Sigmoid colon (tissue), 7 donors: ENCODE measurements at regions of chr9 and their contacts with region 1.

Region 1: DNA sequence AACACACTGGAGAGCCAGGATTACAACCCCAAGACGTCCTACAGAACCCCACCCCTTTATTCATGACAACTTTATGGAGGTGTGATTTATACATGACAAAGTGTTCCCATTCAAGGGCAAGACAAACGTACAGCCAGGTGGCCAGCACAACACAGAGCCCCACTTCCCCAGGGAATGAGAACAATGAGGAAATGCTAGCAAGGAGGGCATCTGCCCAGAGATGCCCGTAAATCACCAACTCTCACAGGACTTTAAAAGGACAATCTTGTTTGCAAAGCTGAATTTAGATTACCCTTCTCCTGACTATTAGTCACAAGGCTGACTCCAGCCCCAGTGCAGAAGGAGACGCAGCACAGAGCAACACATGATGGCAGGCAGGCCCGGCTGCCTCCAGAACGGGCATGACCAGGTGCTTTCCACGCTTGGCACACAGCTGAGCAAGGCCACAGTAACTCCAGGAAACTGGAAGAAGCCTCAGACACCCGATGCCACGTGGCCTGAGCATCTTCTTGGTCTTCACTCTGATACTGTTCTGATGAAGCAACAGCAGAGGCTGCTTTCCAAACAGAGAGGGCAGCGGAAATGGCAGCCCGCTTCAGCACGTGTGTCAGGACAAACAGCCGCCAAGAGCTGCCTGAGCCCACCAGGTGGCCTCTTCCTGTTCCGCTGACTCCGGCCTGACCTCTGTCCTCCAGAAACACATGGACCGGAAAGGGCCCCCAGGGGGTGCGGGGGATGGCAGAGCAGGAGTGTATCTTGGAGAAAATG is 51.4 kb downstream of the ROR2 start:
- DNase-seq: peak; percentile 92
- H3K4me3 ChIP-seq: no peak overlapping the region
- H3K27ac ChIP-seq: peak overlapping the region; percentile 82 to 94 (median 86)
- H3K4me1 ChIP-seq: peaks cover 0 to 99% (median 95%) of the 10 kb centered on the region in 4 donors
- H3K27me3 ChIP-seq: no peaks in the 10 kb centered on the region
- CTCF ChIP-seq: no peak
- EP300 ChIP-seq: peak; percentile 73 to 92 (median 74)
- POLR2A ChIP-seq: no peak

Region 2: DNA sequence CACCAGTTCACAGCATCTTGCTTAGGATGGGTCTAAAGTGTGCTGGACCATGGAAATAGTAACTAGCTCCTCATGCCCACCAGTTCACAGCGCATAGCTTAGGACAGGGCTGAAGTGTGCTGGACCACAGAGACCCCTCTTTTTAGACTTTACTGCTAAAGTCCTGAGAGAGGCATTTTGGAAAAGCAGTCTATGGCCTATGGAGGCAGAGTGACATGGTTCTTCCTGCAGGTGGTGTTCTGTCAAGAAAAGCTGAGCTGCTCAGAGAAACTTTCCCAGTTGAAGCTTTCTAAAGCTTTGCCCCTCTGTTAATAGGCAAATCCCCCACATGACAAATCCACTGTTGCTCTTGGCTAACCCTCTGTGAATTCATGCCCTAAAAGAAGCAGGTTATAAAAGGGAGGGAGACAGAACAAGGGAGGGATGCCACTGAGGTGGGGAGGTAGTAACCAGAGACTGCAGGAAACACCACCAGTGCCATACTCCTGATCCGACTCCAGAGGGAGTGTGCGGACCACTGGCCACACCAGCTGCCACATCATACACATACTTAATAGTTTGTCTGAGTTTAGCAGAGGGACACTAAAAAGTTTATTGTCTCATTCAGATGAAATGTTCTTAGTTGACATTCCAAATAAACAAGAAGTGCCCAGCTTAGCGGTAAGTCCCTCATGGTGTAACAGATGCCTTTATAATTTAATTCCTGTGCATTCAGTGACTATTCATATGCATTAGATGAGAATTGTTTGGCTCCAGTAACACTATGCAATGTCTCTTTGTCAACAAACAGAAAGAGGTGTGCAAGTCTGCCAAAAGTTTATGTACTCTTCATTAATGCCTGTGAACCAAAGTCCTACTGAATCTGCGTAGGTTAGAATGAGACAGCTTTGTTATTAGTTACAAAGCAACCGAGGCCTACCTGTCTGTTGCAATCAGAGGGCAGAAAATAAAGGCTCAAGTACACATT is 238.8 kb before region 1 on chr9:
- intact Hi-C with region 1: no loop called
- DNase-seq: no peak
- H3K4me3 ChIP-seq: no peak overlapping the region
- H3K27ac ChIP-seq: no peak overlapping the region
- H3K4me1 ChIP-seq: peaks cover 0 to 5% (median 0%) of the 10 kb centered on the region in 4 donors
- H3K27me3 ChIP-seq: no peaks in the 10 kb centered on the region
- CTCF ChIP-seq: peak in 3 of 4 experiments; percentile 16 to 43 (median 36)
- EP300 ChIP-seq: no peak
- POLR2A ChIP-seq: no peak

Region 3: GRCh38 chr9:91837981-91838731 is 60.5 kb before region 1 on chr9:
- intact Hi-C with region 1: no loop called
- DNase-seq: peak; percentile 85
- H3K4me3 ChIP-seq: peak overlapping the region; percentile 11 to 40 (median 23)
- H3K27ac ChIP-seq: peak overlapping the region; percentile 74 to 86 (median 80)
- H3K4me1 ChIP-seq: peaks cover 0 to 99% (median 96%) of the 10 kb centered on the region in 4 donors
- H3K27me3 ChIP-seq: no peaks in the 10 kb centered on the region
- CTCF ChIP-seq: no peak
- EP300 ChIP-seq: no peak
- POLR2A ChIP-seq: no peak

Region 4: DNA sequence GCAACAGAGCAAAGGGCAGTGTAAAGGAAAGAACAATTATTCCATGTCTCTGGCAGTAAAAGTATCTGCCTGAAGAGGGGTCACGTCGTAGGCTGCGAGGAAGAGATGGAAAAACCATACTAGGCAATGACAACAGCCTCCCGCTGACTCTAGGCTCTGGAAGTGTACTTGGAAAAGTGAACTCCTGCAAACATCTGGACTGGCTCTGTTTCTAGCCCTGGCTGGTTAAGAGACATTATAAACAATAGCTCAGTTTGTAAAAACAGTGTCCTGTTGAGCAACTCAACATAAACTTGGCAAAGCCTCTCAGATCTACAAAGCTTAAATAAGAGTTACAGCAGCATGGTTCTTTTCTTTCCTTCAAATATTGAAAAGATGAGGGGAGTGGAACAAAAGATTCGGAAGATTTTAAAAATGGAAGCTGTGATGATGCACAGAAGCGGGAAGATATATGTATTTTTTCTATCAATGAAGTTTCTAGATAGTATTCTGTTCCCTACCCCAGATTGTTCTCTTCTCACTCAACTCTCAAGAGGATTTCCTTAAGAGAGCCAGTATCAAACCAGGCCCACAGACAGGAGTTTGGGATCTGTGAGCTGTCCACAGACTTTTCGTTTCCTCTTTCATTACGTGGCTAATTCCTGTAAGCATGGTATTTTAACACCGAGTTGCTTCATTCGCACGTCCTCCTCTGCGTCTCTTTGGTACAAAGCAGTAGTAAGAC is 137.2 kb after region 1 on chr9:
- intact Hi-C with region 1: loop called (anchors 10 kb)
- DNase-seq: peak; percentile 93
- H3K4me3 ChIP-seq: peak overlapping the region in 1 of 4 donors; percentile 13
- H3K27ac ChIP-seq: peak overlapping the region; percentile 63 to 86 (median 80)
- H3K4me1 ChIP-seq: peaks cover 0 to 51% (median 38%) of the 10 kb centered on the region in 4 donors
- H3K27me3 ChIP-seq: no peaks in the 10 kb centered on the region
- CTCF ChIP-seq: no peak
- EP300 ChIP-seq: peak; percentile 62 to 87 (median 67)
- POLR2A ChIP-seq: no peak